ENCODE measurements at regions of chr5 and their contacts with region 1.

Region 1: GRCh38 chr5:35926389-35927051 is 11.9 kb downstream of the CAPSL start:
- DNase-seq: peak; percentile 76
- H3K4me3 Mint-ChIP-seq: no peak overlapping the region
- H3K27ac Mint-ChIP-seq: no peak overlapping the region
- H3K4me1 Mint-ChIP-seq: peaks cover 40% of the 10 kb centered on the region
- H3K27me3 Mint-ChIP-seq: peaks cover 5% of the 10 kb centered on the region

Region 2: GRCh38 chr5:35087991-35088390 is 838.5 kb before region 1 on chr5:
- CTCF ChIA-PET with region 1: interaction called, 12 read pairs
- DNase-seq: no peak
- H3K4me3 Mint-ChIP-seq: no peak overlapping the region
- H3K27ac Mint-ChIP-seq: no peak overlapping the region
- H3K4me1 Mint-ChIP-seq: no peaks in the 10 kb centered on the region
- H3K27me3 Mint-ChIP-seq: peaks cover 4% of the 10 kb centered on the region

Region 3: GRCh38 chr5:35626108-35626507 is 300.4 kb before region 1 on chr5:
- CTCF ChIA-PET with region 1: interaction called, 23 read pairs
- DNase-seq: no peak
- H3K4me3 Mint-ChIP-seq: no peak overlapping the region
- H3K27ac Mint-ChIP-seq: no peak overlapping the region
- H3K4me1 Mint-ChIP-seq: peaks cover 4% of the 10 kb centered on the region
- H3K27me3 Mint-ChIP-seq: no peaks in the 10 kb centered on the region

Region 4: DNA sequence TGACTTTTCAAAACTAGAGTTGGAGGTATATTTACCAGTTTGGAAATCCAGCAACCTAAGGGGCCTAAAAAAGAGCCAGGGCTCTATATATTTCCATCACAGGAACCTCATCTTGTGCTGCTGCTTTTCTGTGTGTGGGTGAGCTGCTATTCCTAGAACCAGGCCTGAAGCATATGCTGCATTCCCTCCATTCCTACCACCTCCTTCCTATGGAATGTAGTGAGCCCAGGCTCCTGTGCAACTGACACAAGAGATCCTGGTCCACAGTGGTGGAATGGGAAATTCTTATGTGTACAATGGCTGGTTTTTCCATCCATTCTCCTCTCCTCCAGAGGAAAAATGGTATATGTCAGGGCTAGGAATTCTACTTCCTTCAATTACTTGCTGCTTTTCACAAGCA is 269.8 kb before region 1 on chr5:
- CTCF ChIA-PET with region 1: interaction called, 209 read pairs
- DNase-seq: no peak
- H3K4me3 Mint-ChIP-seq: no peak overlapping the region
- H3K27ac Mint-ChIP-seq: no peak overlapping the region
- H3K4me1 Mint-ChIP-seq: peaks cover 8% of the 10 kb centered on the region
- H3K27me3 Mint-ChIP-seq: no peaks in the 10 kb centered on the region

Region 5: DNA sequence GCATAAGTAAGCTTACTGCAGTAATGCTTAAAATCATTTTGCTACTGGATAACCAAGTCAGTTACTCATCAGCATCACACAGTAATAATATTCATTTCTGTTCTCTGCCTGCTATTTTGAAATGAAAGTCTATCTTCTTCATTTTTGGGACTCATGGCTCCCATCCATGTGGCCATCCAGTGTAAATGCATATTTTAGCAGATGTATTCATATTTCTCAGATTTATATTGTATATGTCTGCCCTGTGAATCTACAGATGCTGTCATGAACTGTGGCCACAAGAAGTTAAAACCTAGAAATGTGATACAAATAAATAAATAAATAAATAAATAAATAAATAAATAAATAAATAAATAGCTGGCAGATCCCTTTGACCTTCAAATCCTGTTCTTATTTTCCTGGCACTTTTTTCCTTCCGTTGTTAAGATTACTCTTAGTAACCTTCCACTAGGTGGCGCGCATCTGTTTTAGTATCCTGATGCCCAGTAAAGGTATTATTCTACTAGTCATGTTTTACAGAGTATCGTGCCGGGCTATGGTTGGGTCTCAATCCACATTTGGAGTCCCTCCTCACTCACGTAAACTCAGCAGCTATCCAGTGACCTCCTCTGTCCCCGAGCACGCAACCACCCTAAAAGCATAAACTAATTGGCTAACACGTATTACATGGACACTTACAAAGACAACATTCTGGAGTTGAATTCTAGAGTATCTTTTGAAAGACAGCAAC is 149.0 kb before region 1 on chr5:
- CTCF ChIA-PET with region 1: interaction called, 141 read pairs
- DNase-seq: peak; percentile 82
- H3K4me3 Mint-ChIP-seq: no peak overlapping the region
- H3K27ac Mint-ChIP-seq: peak overlapping the region; percentile 55
- H3K4me1 Mint-ChIP-seq: peaks cover 66% of the 10 kb centered on the region
- H3K27me3 Mint-ChIP-seq: no peaks in the 10 kb centered on the region

Region 6: GRCh38 chr5:35881758-35882157 is 44.8 kb before region 1 on chr5:
- CTCF ChIA-PET with region 1: interaction called, 10 read pairs
- DNase-seq: no peak
- H3K4me3 Mint-ChIP-seq: no peak overlapping the region
- H3K27ac Mint-ChIP-seq: no peak overlapping the region
- H3K4me1 Mint-ChIP-seq: peaks cover 74% of the 10 kb centered on the region
- H3K27me3 Mint-ChIP-seq: no peaks in the 10 kb centered on the region

Region 7: GRCh38 chr5:35971186-35971877 is 44.8 kb after region 1 on chr5:
- CTCF ChIA-PET with region 1: no interaction called
- DNase-seq: no peak
- H3K4me3 Mint-ChIP-seq: no peak overlapping the region
- H3K27ac Mint-ChIP-seq: no peak overlapping the region
- H3K4me1 Mint-ChIP-seq: no peaks in the 10 kb centered on the region
- H3K27me3 Mint-ChIP-seq: peaks cover 6% of the 10 kb centered on the region

Region 8: DNA sequence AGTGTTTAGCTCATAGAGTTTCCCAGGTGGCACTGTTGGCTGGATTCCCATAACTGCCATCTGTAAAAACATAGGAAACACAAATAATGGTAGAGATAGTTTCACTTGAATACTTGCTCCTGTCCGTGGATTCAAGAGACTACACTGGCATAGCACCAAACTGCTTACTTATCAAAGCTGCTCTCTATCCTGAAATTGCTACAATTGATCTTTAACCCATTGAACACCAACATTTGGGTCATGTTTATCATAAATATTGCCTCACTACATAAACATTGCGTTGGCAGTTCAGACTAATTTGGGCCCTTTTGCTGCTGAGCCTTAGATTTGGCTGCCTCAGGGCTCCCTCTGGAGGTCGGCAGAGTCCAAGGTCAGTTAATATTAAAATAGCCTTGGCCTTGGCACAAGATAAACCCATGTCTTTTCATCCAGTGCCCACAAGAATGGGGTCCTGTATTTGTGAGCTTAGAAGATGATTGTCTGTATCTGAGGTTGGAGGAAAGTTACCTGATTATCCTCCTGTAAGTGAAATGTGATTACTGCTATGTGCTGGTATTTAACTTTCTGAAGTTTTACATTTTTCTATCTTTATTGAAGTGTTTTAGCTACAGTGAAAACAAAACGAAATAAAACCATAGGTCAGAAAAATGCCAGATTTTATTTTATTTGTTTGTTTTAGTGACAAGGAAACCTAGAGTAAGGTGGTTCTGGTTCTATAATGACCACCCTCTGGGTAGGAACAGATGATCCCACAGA is 379.2 kb after region 1 on chr5:
- CTCF ChIA-PET with region 1: no interaction called
- DNase-seq: peak; percentile 39
- H3K4me3 Mint-ChIP-seq: no peak overlapping the region
- H3K27ac Mint-ChIP-seq: no peak overlapping the region
- H3K4me1 Mint-ChIP-seq: no peaks in the 10 kb centered on the region
- H3K27me3 Mint-ChIP-seq: peaks cover 8% of the 10 kb centered on the region

Measured in activated naive CD4-positive, alpha-beta T cell treated with anti-CD3 and anti-CD28 coated beads, Interleukin-2, amount 10 ng/mL, durations not matched to agents 7 days and 5 days (primary cell).